ENCODE measurements at regions of chr10 and their contacts with region 1.

Region 1: DNA sequence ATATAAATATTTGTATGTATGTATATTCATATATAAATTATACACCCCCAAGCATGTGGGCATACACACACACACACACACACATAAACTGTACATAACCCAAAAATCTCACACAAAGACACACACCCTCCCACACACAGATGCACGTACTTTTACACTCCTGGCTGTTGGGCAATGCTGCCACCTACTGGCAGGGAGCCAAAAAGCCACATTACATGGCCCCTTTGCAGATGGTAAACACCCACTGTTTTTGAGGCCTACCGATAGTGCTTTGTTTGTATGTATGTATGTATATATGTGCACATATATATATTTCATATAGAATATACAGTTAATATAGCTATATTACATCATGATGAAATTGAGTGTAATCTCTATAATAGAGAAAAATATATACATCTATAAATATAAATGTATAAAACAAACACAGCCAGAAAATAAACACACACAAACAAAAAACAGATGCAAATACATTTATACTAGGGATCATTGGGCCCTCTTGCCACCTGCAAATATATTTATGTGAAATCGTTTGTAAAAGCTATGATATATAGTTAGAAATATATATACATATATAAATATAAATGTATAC is 120.1 kb upstream of the ACBD5 start:
- DNase-seq: peak; percentile 89
- H3K4me3 ChIP-seq: no peak overlapping the region
- H3K27ac ChIP-seq: no peak overlapping the region
- H3K4me1 ChIP-seq: no peaks in the 10 kb centered on the region
- H3K27me3 ChIP-seq: no peaks in the 10 kb centered on the region
- CTCF ChIP-seq: peak; percentile 92

Region 2: GRCh38 chr10:26890956-26891355 is 469.7 kb before region 1 on chr10:
- CTCF ChIA-PET with region 1: no interaction called
- POLR2A ChIA-PET with region 1: no interaction called
- intact Hi-C with region 1: loop called (anchors 1 kb)
- DNase-seq: peak; percentile 90
- H3K4me3 ChIP-seq: no peak overlapping the region
- H3K27ac ChIP-seq: no peak overlapping the region
- H3K4me1 ChIP-seq: no peaks in the 10 kb centered on the region
- H3K27me3 ChIP-seq: no peaks in the 10 kb centered on the region
- CTCF ChIP-seq: peak; percentile 90

Region 3: DNA sequence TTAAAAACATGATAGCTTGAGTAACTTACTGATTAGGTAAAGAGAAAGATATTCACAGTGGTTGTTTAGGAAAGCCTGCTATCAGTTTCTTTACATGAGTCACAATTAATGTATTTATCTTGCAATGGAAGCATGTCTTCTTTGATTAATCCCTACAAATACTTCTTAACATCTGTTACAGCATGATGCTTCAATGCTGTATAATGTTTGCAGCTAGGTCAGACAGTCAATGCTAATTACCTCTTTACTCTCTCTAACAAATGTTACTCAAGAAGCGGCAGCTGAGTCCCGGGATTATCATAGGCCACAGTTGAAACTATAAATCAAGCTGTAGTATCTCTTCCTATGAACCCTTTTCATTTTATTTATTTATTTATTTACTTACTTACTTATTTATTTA is 153.3 kb before region 1 on chr10:
- CTCF ChIA-PET with region 1: no interaction called
- POLR2A ChIA-PET with region 1: no interaction called
- intact Hi-C with region 1: no loop called
- DNase-seq: no peak
- H3K4me3 ChIP-seq: no peak overlapping the region
- H3K27ac ChIP-seq: no peak overlapping the region
- H3K4me1 ChIP-seq: no peaks in the 10 kb centered on the region
- H3K27me3 ChIP-seq: no peaks in the 10 kb centered on the region
- CTCF ChIP-seq: no peak